Activated naive CD4-positive, alpha-beta T cell treated with anti-CD3 and anti-CD28 coated beads for 36 hours (primary cell): ENCODE measurements at regions of chr14 and their contacts with region 1.

Region 1: DNA sequence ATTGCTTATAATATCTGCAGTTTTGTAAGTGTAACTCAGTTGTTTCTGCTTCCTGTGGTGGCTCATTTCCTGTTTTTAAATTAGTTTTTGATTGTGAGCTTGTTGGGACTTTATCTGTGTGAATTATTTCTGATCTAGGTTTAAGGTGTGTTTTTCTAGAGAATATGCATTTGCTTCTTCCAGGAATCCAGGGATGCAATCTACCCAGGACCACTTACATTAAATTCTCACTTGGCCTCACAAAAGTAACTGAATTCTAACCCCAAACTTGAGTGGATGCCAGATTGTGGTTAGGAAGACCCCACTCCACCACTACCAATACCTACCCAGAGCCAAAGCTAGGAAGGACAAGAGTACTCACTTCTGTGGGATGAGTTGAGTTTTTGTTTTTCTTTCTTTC is 11.9 kb downstream of the STYX start:
- DNase-seq: no peak
- H3K4me3 Mint-ChIP-seq: peak overlapping the region; percentile 68
- H3K27ac Mint-ChIP-seq: peak overlapping the region; percentile 95
- H3K4me1 Mint-ChIP-seq: peaks cover 63% of the 10 kb centered on the region
- H3K27me3 Mint-ChIP-seq: no peaks in the 10 kb centered on the region

Region 2: DNA sequence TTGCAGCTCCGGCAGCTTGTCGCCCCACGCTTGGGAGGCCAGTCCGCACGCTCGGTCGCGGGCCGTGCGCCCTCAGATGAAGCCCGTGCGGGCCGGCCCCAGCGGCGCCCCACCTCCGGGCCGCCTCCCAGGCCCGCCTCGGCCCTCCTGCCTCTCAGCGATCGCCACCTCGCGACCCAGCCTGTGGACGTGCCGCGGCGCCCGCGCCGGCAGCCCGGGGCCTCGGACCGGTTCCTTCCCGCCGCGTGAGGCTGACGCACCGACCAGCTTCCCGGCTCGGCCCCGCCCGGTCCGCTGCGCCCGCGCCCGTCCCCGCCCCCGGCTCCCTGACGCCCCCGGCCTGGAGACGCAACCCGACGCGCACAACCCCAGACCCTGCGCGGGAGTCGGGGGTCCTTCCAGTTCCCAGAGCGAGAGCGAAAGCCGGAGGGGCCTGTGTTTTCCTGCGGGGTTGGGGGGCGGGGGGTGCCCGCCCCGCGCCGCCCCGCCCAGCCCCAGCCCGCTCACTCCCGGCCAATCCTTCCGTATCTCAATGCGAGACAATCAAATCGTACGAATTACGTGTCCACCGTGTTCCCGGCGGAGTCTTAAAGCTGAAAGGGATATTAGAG is 46.3 kb before region 1 on chr14 and contains the start of gene ERO1A:
- CTCF ChIA-PET with region 1: no interaction called
- intact Hi-C with region 1: loop called (anchors 1 kb)
- DNase-seq: peak; percentile 72
- H3K4me3 Mint-ChIP-seq: peak within 1 kb of the TSS; percentile 99
- H3K27ac Mint-ChIP-seq: peak within 1 kb of the TSS; percentile 99
- H3K4me1 Mint-ChIP-seq: peaks cover 33% of the 10 kb centered on the region
- H3K27me3 Mint-ChIP-seq: no peaks in the 10 kb centered on the region
- total RNA-seq, gene ERO1A: 87.4 to 90.4 TPM

Region 3: DNA sequence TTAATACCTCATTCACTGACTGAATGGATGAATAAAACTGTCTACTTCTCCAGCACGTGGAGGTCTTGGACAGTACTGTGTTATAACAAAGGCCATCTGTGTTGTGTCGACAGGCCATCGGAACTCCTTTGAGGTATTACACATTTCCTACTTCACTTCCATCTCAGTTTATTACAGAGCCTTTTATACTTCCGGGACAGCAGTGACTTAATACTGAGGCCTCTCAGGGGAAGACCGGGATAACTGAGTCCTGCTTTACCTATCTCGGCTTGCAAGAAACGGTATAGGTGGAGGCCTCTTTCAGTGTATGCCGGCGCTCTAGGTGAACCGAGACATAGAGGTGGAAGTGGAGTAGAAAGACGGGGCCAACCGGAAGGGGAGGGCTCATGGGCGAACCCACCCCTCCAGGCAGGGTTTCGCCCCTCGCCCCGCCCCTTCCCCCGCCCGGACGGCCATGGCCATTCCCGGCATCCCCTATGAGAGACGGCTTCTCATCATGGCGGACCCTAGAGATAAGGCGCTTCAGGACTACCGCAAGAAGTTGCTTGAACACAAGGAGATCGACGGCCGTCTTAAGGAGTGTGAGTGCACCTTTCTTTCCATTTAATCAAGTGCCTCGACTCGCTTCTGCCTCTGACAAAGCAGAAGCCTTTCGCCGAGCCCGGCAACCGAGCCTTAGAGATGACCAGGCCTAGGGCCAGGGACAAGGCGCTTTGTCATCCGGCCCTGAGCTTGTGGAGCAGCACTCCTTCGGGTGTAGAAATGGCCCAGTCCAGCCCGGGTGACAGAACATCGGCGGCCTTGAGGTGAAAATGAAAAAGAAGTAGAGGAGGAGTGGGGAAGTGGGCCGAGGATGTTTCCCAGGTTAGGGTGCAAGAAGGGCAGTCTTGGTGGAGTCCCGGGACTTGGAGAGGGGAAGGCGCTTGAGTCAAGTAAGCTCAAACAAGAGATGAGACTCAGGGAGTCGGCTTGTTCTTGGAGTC is 34.9 kb before region 1 on chr14 and contains the start of gene PSMC6:
- CTCF ChIA-PET with region 1: no interaction called
- intact Hi-C with region 1: loop called (anchors 1 kb)
- DNase-seq: peak; percentile 97
- H3K4me3 Mint-ChIP-seq: peak within 1 kb of the TSS; percentile 100
- H3K27ac Mint-ChIP-seq: peak within 1 kb of the TSS; percentile 97
- H3K4me1 Mint-ChIP-seq: peaks cover 47% of the 10 kb centered on the region
- H3K27me3 Mint-ChIP-seq: no peaks in the 10 kb centered on the region
- total RNA-seq, gene PSMC6: 103 to 114 TPM

Region 4: DNA sequence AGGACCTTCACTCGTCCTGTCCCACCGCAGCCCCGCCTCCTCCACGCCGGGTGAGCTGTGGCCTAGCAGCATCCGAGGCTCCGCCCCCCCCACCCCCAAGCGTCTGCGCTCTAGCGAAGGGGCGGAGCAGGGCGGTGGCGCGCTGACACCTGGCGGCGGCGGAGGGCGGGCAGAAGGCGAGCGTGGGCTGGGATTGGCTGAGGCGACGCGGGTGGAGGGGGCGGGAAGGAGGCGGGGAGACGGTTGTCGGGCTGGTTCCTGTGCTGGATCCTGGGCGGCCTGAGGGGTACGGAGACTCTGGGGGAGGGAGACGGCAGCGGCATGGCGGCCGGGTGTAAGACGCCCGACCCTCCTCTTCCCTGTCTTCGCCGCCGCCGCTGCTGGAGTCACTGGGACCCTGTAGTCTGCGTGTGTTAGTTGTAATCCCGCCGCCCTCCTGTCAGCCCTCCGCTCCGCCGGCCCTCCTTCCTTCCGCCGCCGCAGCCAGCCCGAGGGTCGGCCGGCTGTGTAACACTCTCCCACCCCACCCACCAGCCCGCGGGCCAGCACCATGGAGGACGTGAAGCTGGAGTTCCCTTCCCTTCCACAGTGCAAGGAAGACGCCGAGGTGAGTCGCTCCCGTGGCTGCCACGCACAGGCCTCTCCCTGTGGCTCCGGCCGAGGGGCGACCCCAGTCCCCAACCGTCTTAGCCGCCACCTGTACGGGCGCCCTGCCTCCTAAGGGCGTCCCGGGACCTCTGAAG is 11.8 kb before region 1 on chr14 and contains the start of gene STYX:
- CTCF ChIA-PET with region 1: interaction called, 10 read pairs
- intact Hi-C with region 1: loop called (anchors 1 kb)
- DNase-seq: peak; percentile 98
- H3K4me3 Mint-ChIP-seq: peak within 1 kb of the TSS; percentile 84
- H3K27ac Mint-ChIP-seq: peak within 1 kb of the TSS; percentile 86
- H3K4me1 Mint-ChIP-seq: peaks cover 38% of the 10 kb centered on the region
- H3K27me3 Mint-ChIP-seq: no peaks in the 10 kb centered on the region
- total RNA-seq, gene STYX: 13.3 to 14.1 TPM